ENCODE measurements at regions of chr11 and their contacts with region 1.

Region 1: GRCh38 chr11:119205574-119206510 is at the start of gene CBL:
- DNase-seq: peak; percentile 94 to 100 (median 98)
- ATAC-seq: peak; percentile 91
- H3K4me3 ChIP-seq: peak within 1 kb of the TSS; percentile 93 to 94
- H3K4me3 Mint-ChIP-seq: peak within 1 kb of the TSS; percentile 97
- H3K27ac ChIP-seq: peak within 1 kb of the TSS; percentile 61 to 79
- H3K27ac Mint-ChIP-seq: peak within 1 kb of the TSS; percentile 93
- H3K4me1 ChIP-seq: peaks cover 24% of the 10 kb centered on the region
- H3K4me1 Mint-ChIP-seq: peaks cover 44% of the 10 kb centered on the region
- H3K27me3 ChIP-seq: no peaks in the 10 kb centered on the region
- H3K27me3 Mint-ChIP-seq: no peaks in the 10 kb centered on the region
- CTCF ChIP-seq: peak; percentile 70
- total RNA-seq, gene CBL: 13.5 to 13.8 TPM

Region 2: DNA sequence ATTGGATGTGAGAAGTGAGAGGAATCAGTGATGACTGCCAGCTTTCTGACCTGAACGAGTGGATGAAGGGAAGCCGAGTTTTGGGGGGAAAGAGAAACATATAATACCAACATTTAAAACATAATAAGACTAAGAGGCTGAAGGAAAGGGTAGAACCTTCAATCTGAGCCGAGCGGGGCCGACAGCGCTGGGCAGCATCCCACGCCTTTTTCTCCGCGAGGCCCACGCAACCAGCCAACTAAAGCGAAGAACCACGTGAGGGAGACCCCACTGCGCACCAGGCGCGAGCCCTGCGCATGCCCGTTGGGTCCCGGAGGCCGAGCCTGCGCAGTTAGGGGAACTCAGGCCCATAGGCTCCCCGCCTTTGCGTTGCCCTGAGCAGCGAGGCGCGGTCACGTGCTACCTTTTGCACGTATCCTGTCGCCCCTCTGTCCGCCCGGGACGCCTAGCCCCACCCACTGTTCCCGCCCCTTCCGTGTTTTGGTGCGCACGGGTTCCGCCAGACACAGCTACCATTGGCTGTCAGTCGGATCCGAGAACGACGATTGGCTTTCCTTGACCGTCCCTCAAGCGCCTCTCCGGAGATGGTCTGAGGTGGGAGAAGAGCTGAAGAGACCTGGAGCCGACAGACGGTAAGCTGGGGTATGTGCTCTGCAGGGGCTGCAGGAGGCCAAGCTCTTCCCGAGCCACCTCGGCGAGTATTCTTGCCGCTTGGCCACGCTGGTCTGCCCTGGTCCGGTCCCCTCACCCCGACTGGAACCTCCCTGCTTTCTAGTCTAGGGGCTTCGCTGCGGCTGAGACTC is 84.6 kb before region 1 on chr11 and contains the start of gene HINFP:
- CTCF ChIA-PET with region 1: no interaction called
- POLR2A ChIA-PET with region 1: no interaction called
- intact Hi-C with region 1: loop called in 1 of 2 experiments (anchors 1 kb)
- DNase-seq: peak; percentile 100
- ATAC-seq: peak; percentile 97
- H3K4me3 ChIP-seq: peak within 1 kb of the TSS; percentile 81 to 93
- H3K4me3 Mint-ChIP-seq: peak within 1 kb of the TSS; percentile 87
- H3K27ac ChIP-seq: peak within 1 kb of the TSS; percentile 69 to 80
- H3K27ac Mint-ChIP-seq: peak within 1 kb of the TSS; percentile 92
- H3K4me1 ChIP-seq: peaks cover 24% of the 10 kb centered on the region
- H3K4me1 Mint-ChIP-seq: peaks cover 43% of the 10 kb centered on the region
- H3K27me3 ChIP-seq: no peaks in the 10 kb centered on the region
- H3K27me3 Mint-ChIP-seq: no peaks in the 10 kb centered on the region
- CTCF ChIP-seq: no peak
- total RNA-seq, gene HINFP: 17.0 to 19.5 TPM

Region 3: DNA sequence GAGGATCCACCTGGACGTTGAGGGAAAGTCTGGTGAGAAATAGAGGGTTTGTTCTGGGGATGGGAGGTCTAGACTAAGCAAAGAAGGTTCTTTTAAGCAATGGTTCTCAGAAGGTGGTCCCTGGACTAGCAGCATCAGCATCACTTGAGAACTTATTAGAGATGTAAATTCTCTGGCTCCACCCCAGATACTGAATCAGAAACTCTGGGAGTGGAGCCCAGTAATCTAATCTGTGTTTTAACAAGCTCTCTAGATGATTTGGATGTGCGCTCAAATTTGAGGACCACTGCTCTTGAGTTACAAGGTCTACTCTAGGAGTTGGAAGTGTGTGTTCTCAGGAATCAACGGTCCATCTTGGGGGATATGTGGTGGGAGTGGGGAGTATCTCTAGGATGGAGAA is 60.3 kb before region 1 on chr11:
- CTCF ChIA-PET with region 1: no interaction called
- POLR2A ChIA-PET with region 1: no interaction called
- intact Hi-C with region 1: no loop called
- DNase-seq: no peak
- ATAC-seq: no peak
- H3K4me3 ChIP-seq: no peak overlapping the region
- H3K4me3 Mint-ChIP-seq: no peak overlapping the region
- H3K27ac ChIP-seq: no peak overlapping the region
- H3K27ac Mint-ChIP-seq: no peak overlapping the region
- H3K4me1 ChIP-seq: peaks cover 21% of the 10 kb centered on the region
- H3K4me1 Mint-ChIP-seq: peaks cover 13% of the 10 kb centered on the region
- H3K27me3 ChIP-seq: peaks cover 0 to 14% of the 10 kb centered on the region in 2 experiments
- H3K27me3 Mint-ChIP-seq: peaks cover 40% of the 10 kb centered on the region
- CTCF ChIP-seq: no peak

Region 4: GRCh38 chr11:119236490-119236889 is 30.6 kb after region 1 on chr11:
- CTCF ChIA-PET with region 1: interaction called, 10 read pairs
- POLR2A ChIA-PET with region 1: interaction called, 4 read pairs
- intact Hi-C with region 1: loop called in 1 of 2 experiments (anchors 2 kb)
- DNase-seq: no peak
- ATAC-seq: no peak
- H3K4me3 ChIP-seq: no peak overlapping the region
- H3K4me3 Mint-ChIP-seq: no peak overlapping the region
- H3K27ac ChIP-seq: no peak overlapping the region
- H3K27ac Mint-ChIP-seq: no peak overlapping the region
- H3K4me1 ChIP-seq: peaks cover 20% of the 10 kb centered on the region
- H3K4me1 Mint-ChIP-seq: peaks cover 46% of the 10 kb centered on the region
- H3K27me3 ChIP-seq: no peaks in the 10 kb centered on the region
- H3K27me3 Mint-ChIP-seq: no peaks in the 10 kb centered on the region
- CTCF ChIP-seq: no peak

Region 5: DNA sequence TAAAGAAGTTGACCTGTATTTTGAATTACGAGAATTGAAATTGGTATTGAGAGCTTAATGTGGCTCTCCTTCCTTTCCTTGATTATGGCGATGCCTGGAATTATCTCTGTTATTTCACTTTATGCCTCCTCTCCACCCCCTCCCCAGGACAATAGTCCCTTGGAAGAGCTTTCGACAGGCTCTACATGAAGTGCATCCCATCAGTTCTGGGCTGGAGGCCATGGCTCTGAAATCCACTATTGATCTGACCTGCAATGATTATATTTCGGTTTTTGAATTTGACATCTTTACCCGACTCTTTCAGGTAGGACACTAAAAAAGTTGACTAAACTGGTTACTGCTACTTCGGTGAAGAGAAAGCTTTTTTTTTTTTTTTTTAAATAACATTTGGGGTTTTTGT is 67.9 kb after region 1 on chr11:
- CTCF ChIA-PET with region 1: interaction called, 24 read pairs
- POLR2A ChIA-PET with region 1: interaction called, 6 read pairs
- intact Hi-C with region 1: loop called in 1 of 2 experiments (anchors 5 kb)
- DNase-seq: no peak
- ATAC-seq: no peak
- H3K4me3 ChIP-seq: no peak overlapping the region
- H3K4me3 Mint-ChIP-seq: no peak overlapping the region
- H3K27ac ChIP-seq: no peak overlapping the region
- H3K27ac Mint-ChIP-seq: peak overlapping the region; percentile 38
- H3K4me1 ChIP-seq: peaks cover 7% of the 10 kb centered on the region
- H3K4me1 Mint-ChIP-seq: peaks cover 18% of the 10 kb centered on the region
- H3K27me3 ChIP-seq: no peaks in the 10 kb centered on the region
- H3K27me3 Mint-ChIP-seq: no peaks in the 10 kb centered on the region
- CTCF ChIP-seq: no peak

Region 6: GRCh38 chr11:119323538-119324033 is 117.7 kb after region 1 on chr11:
- CTCF ChIA-PET with region 1: interaction called, 70 read pairs
- POLR2A ChIA-PET with region 1: interaction called, 12 read pairs
- intact Hi-C with region 1: loop called (anchors 1 kb)
- DNase-seq: peak; percentile 65 to 88 (median 76)
- ATAC-seq: peak; percentile 18
- H3K4me3 ChIP-seq: no peak overlapping the region
- H3K4me3 Mint-ChIP-seq: no peak overlapping the region
- H3K27ac ChIP-seq: no peak overlapping the region
- H3K27ac Mint-ChIP-seq: no peak overlapping the region
- H3K4me1 ChIP-seq: peaks cover 11% of the 10 kb centered on the region
- H3K4me1 Mint-ChIP-seq: peaks cover 26% of the 10 kb centered on the region
- H3K27me3 ChIP-seq: peaks cover 0 to 2% of the 10 kb centered on the region in 2 experiments
- H3K27me3 Mint-ChIP-seq: peaks cover 1% of the 10 kb centered on the region
- CTCF ChIP-seq: peak; percentile 77

Region 7: DNA sequence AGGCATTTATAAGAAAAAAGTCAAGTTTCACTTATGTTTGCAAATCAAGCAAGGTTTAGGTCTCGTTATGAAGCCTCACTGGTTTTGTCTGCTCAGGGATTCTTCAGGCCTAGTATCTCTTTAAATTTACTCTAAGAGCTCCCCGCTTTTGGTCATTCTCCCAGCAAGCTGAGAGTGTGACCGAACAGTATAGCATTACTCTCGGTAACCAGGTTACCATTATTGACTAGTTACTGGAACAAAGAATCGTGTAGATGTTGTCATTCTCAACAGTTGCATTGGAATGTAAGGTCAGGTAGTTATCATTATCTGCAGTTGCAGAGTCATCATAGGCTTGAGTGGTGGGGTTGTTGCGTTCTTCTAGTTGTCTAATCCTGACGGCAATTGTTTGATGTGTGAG is 185.4 kb after region 1 on chr11:
- CTCF ChIA-PET with region 1: no interaction called
- POLR2A ChIA-PET with region 1: no interaction called
- intact Hi-C with region 1: no loop called
- DNase-seq: no peak
- ATAC-seq: no peak
- H3K4me3 ChIP-seq: no peak overlapping the region
- H3K4me3 Mint-ChIP-seq: no peak overlapping the region
- H3K27ac ChIP-seq: no peak overlapping the region
- H3K27ac Mint-ChIP-seq: no peak overlapping the region
- H3K4me1 ChIP-seq: no peaks in the 10 kb centered on the region
- H3K4me1 Mint-ChIP-seq: no peaks in the 10 kb centered on the region
- H3K27me3 ChIP-seq: peaks cover 0 to 4% of the 10 kb centered on the region in 2 experiments
- H3K27me3 Mint-ChIP-seq: peaks cover 34% of the 10 kb centered on the region
- CTCF ChIP-seq: no peak

Region 8: GRCh38 chr11:119474682-119475596 is 269.1 kb after region 1 on chr11:
- CTCF ChIA-PET with region 1: no interaction called
- POLR2A ChIA-PET with region 1: no interaction called
- intact Hi-C with region 1: loop called in 1 of 2 experiments (anchors 10 kb)
- DNase-seq: peak; percentile 10 to 71 (median 48)
- ATAC-seq: peak; percentile 75
- H3K4me3 ChIP-seq: no peak overlapping the region
- H3K4me3 Mint-ChIP-seq: no peak overlapping the region
- H3K27ac ChIP-seq: no peak overlapping the region
- H3K27ac Mint-ChIP-seq: no peak overlapping the region
- H3K4me1 ChIP-seq: no peaks in the 10 kb centered on the region
- H3K4me1 Mint-ChIP-seq: no peaks in the 10 kb centered on the region
- H3K27me3 ChIP-seq: no peaks in the 10 kb centered on the region
- H3K27me3 Mint-ChIP-seq: peaks cover 34% of the 10 kb centered on the region
- CTCF ChIP-seq: peak; percentile 69

Region 9: DNA sequence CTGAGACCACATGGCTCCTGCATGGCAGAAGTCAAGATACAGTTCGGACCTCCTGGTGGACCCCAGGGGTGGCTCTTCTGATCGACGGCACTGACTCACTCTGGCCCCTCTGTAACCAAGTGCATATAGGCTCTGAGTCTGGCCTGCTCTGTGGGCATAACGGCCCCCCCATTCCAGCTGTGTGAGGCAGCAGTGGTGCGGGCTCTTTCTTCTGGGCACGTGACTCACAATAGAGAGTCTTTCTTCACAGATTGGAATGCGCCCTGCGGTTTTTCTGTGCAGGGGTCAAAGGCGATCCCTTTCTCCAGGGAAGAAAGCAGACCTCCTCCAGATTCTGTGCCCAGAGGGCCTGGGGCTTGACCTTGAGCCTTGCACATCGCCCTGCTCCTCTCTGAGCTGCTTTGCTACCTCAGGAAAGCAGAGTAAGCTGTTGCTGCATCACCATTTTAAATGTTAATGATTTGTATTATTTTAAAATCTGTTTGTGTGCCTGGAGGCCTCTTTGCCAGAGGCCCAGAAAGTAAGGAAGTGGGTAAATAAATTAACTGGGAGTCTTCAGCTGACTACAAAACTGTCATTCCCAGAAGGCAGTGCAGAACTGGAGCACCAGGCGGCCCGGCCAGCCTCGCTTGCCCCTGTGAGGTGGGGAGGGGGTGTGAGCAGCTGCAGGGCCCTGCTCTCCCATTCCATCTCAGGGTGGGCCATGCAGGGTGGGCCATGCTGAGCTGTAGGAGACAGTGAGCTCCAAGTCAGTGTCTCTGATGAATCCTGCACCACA is 1504.7 kb after region 1 on chr11:
- CTCF ChIA-PET with region 1: no interaction called
- POLR2A ChIA-PET with region 1: no interaction called
- intact Hi-C with region 1: no loop called
- DNase-seq: no peak
- ATAC-seq: no peak
- H3K4me3 ChIP-seq: no peak overlapping the region
- H3K4me3 Mint-ChIP-seq: no peak overlapping the region
- H3K27ac ChIP-seq: no peak overlapping the region
- H3K27ac Mint-ChIP-seq: no peak overlapping the region
- H3K4me1 ChIP-seq: no peaks in the 10 kb centered on the region
- H3K4me1 Mint-ChIP-seq: peaks cover 9% of the 10 kb centered on the region
- H3K27me3 ChIP-seq: no peaks in the 10 kb centered on the region
- H3K27me3 Mint-ChIP-seq: peaks cover 13% of the 10 kb centered on the region
- CTCF ChIP-seq: no peak